GM10248 (cell line): ENCODE measurements at regions of chr14 and their contacts with region 1.

Region 1: DNA sequence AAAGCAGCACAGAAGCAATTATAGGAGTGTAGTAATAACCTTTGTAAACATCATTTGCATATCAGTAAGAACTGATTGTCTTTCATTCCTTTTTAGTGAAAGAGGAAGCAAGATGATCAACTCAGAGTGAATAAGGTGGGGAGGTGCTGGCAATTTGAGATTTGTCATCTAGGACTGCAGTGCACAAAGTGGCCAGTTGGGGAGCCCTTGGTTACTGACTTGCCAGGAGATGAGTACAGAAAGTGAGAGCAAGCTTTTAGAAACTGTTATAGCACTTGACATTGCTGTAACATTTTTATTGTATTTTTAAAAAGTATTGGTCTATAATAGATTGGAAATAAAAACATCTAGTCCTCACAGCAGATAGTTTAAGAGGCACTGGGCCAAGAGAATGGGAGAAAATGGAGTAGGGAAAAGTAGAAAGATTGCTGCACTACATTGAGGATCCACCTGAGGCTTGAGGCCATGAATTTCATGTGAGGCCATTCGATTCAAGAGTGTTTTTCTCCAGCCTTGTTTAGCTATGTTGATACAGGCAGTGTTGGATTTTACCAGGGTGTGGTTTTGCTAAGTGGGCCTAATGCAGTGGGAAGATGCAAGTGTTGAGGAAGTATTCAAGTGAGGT is 98.2 kb downstream of the SNAPC1 start:
- DNase-seq: peak; percentile 75
- CTCF ChIP-seq: peak; percentile 60

Region 2: GRCh38 chr14:61252369-61253063 is 607.9 kb before region 1 on chr14:
- CTCF ChIA-PET with region 1: no interaction called
- POLR2A ChIA-PET with region 1: no interaction called
- DNase-seq: peak; percentile 68
- CTCF ChIP-seq: peak; percentile 86

Region 3: DNA sequence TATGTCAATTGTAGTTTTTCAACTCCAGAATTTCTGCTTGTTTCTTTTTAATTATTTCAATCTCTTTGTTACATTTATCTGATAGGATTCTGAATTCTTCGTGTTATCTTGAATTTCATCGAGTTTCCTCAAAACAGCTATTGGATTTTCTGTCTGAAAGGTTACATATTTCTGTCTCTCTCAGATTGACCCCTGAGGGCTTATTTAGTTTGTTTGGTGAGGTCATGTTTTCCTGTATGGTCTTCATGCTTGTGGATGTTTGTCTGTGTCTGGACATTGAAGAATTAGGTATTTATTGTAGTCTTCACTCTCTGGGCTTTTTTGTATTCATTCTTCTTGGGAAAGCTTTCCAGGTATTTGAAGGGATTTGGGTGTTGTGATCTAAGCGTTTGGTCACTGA is 12.5 kb before region 1 on chr14:
- CTCF ChIA-PET with region 1: interaction called, 10 read pairs
- POLR2A ChIA-PET with region 1: no interaction called
- DNase-seq: no peak
- CTCF ChIP-seq: no peak

Region 4: DNA sequence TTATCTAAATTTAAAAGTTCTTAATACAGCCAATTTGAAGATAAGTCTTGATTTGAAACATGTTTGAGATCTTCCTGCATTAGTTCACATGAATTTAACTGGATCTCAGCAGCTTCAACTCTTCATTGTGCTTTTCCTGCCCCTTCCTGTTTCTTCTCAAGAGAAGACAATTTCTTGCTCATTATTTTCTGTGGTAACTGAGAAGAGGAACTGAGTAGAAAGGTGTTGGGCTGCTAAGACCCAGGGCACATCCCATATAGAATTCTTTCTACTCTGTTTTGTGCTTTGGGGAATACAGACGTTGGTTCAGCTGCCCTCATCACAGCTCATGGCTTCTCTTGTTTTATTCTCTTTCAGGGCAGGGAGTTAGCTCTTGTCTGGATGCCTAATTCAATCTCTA is 12.0 kb after region 1 on chr14:
- CTCF ChIA-PET with region 1: interaction called, 10 read pairs
- POLR2A ChIA-PET with region 1: no interaction called
- DNase-seq: peak; percentile 49
- CTCF ChIP-seq: no peak

Region 5: GRCh38 chr14:61887628-61888027 is 27.2 kb after region 1 on chr14:
- CTCF ChIA-PET with region 1: interaction called, 23 read pairs
- POLR2A ChIA-PET with region 1: no interaction called
- DNase-seq: no peak
- CTCF ChIP-seq: no peak

Region 6: GRCh38 chr14:61894452-61895077 is 34.2 kb after region 1 on chr14:
- CTCF ChIA-PET with region 1: interaction called, 23 read pairs
- POLR2A ChIA-PET with region 1: no interaction called
- DNase-seq: peak; percentile 66
- CTCF ChIP-seq: peak; percentile 79

Region 7: GRCh38 chr14:62126879-62127478 is 266.6 kb after region 1 on chr14:
- CTCF ChIA-PET with region 1: interaction called, 39 read pairs
- POLR2A ChIA-PET with region 1: no interaction called
- DNase-seq: peak; percentile 28
- CTCF ChIP-seq: peak; percentile 79